OCI-LY7 (cell line): ENCODE measurements at regions of chr6 and their contacts with region 1.

Region 1: GRCh38 chr6:110981202-110981600 is 637 bp upstream of the RPF2 start:
- DNase-seq: no peak
- H3K4me3 ChIP-seq: peak overlapping the region; percentile 92
- H3K27ac ChIP-seq: peak overlapping the region; percentile 48
- H3K4me1 ChIP-seq: peaks cover 30% of the 10 kb centered on the region
- CTCF ChIP-seq: no peak

Region 2: GRCh38 chr6:110815217-110816109 is 165.7 kb before region 1 on chr6 and contains the start of gene CDK19:
- CTCF ChIA-PET with region 1: interaction called, 3 read pairs
- POLR2A ChIA-PET with region 1: interaction called, 6 read pairs
- intact Hi-C with region 1: loop called (anchors 10 kb)
- DNase-seq: peak; percentile 99
- H3K4me3 ChIP-seq: peak within 1 kb of the TSS; percentile 78
- H3K27ac ChIP-seq: peak within 1 kb of the TSS; percentile 87
- H3K4me1 ChIP-seq: peaks cover 41% of the 10 kb centered on the region
- CTCF ChIP-seq: no peak
- total RNA-seq, gene CDK19: 15.4 and 16.3 TPM in 2 replicates

Region 3: DNA sequence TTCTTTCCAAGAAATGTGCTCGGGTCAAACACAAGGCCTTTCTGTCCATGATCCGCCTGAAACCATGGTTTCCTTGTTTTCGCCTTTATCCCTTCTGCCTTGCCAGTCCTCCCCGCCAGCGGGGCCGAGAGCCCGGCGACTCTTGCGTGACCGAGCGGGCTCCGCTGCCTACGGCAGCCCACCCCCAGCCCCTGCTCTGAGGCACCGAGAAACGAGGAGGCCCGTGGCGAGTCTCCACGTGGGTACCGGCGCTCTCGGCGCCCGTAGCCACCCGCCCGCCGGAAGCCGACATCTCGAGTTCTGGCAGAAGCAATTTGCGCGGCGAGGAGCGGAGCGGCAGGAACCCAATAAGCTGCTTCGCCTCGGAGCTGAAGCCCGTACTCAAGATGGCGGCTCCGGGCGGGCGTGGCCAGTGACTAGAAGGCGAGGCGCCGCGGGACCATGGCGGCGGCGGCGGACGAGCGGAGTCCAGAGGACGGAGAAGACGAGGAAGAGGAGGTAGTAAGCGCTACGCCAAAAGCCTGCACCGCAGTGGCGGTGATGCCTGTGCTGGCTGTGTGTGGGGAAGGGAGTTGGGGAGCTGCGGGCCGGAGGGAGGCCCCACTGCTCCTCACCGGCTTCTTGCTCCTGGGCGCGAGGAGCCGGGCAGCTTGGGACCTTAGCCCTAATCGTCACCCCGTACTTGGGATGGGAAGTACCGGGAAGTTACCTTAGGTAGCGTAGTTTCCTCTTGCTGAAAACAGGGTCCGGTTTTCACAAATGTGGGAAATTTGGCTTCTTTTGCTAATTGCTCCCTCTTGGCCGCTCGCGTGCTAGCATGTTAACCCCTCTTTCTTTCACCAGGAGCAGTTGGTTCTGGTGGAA is 22.6 kb before region 1 on chr6 and contains the start of gene GTF3C6:
- CTCF ChIA-PET with region 1: interaction called, 3 read pairs
- POLR2A ChIA-PET with region 1: interaction called, 32 read pairs
- intact Hi-C with region 1: loop called (anchors 2 kb)
- DNase-seq: peak; percentile 96
- H3K4me3 ChIP-seq: peak within 1 kb of the TSS; percentile 78
- H3K27ac ChIP-seq: peak within 1 kb of the TSS; percentile 49
- H3K4me1 ChIP-seq: peaks cover 17% of the 10 kb centered on the region
- CTCF ChIP-seq: no peak
- total RNA-seq, gene GTF3C6: 29.7 and 56.8 TPM in 2 replicates

Region 4: GRCh38 chr6:110999634-111000270 is 18.6 kb after region 1 on chr6:
- CTCF ChIA-PET with region 1: no interaction called
- POLR2A ChIA-PET with region 1: interaction called, 11 read pairs
- intact Hi-C with region 1: no loop called
- DNase-seq: peak; percentile 31
- H3K4me3 ChIP-seq: no peak overlapping the region
- H3K27ac ChIP-seq: no peak overlapping the region
- H3K4me1 ChIP-seq: no peaks in the 10 kb centered on the region
- CTCF ChIP-seq: peak; percentile 77